ENCODE measurements at regions of chr20 and their contacts with region 1.

Region 1: GRCh38 chr20:728248-728944 is 39.9 kb downstream of the SLC52A3 start:
- DNase-seq: peak; percentile 84 to 88 (median 87)
- ATAC-seq: peak; percentile 99
- H3K4me3 ChIP-seq: peak overlapping the region; percentile 61
- H3K27ac ChIP-seq: peak overlapping the region; percentile 74
- H3K4me1 ChIP-seq: peaks cover 5 to 18% of the 10 kb centered on the region in 2 experiments; a peak in 4 of 5 replicates
- H3K27me3 ChIP-seq: no peaks in the 10 kb centered on the region
- CTCF ChIP-seq: peak; percentile 76 to 92 (median 86)
- EP300 ChIP-seq: no peak
- POLR2A ChIP-seq: no peak
- RAD21 ChIP-seq: peak; percentile 95 to 96

Region 2: DNA sequence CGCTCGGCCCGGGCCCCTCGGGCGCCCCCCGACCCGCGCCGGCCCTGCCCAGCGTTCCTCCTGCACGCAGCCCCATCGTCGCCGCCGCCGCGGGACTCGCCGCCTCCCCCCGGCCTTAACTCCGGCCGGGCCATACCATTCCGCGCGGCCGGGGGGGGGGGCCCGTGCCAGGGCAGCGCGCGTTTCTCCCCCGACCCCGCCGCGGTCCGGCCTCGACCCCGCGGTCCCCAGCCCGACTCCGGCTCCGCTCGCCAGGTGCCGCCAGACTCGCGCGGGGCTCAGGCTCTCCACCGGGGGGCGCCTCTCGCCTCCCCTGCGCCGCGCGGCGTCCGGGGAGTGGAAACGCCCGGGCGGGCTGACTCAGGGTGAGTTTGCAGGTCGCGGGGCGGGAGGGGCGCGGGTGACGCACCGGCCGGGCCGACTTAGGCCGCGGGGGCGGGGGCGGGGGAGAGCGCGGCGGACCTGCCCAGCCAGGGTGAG is 75.2 kb before region 1 on chr20 and contains the start of gene SRXN1:
- CTCF ChIA-PET with region 1: interaction called, 22 read pairs
- POLR2A ChIA-PET with region 1: no interaction called
- in situ Hi-C with region 1: loop called (anchors 5 kb)
- intact Hi-C with region 1: loop called (anchors 2 kb)
- DNase-seq: peak; percentile 85 to 95 (median 88)
- ATAC-seq: peak; percentile 93
- H3K4me3 ChIP-seq: peak within 1 kb of the TSS; percentile 70
- H3K27ac ChIP-seq: peak within 1 kb of the TSS; percentile 98
- H3K4me1 ChIP-seq: peaks cover 39 to 46% of the 10 kb centered on the region in 2 experiments
- H3K27me3 ChIP-seq: no peaks in the 10 kb centered on the region
- CTCF ChIP-seq: peak; percentile 52 to 99 (median 96)
- EP300 ChIP-seq: 0 out of 2 replicates have a peak, but pooled peaks have one; percentile 14
- POLR2A ChIP-seq: no peak
- RAD21 ChIP-seq: peak; percentile 84 to 95
- polyA plus RNA-seq, gene SRXN1: 6.8 to 8.4 TPM

Region 3: GRCh38 chr20:672962-673602 is 55.3 kb before region 1 on chr20:
- CTCF ChIA-PET with region 1: no interaction called
- POLR2A ChIA-PET with region 1: interaction called, 3 read pairs
- in situ Hi-C with region 1: no loop called
- intact Hi-C with region 1: loop called (anchors 5 kb)
- DNase-seq: peak in 2 of 4 experiments; percentile 21 to 29
- ATAC-seq: peak; percentile 5
- H3K4me3 ChIP-seq: peak overlapping the region; percentile 6; the same call in 1 of the 2 replicates
- H3K27ac ChIP-seq: peak overlapping the region; percentile 77
- H3K4me1 ChIP-seq: peaks cover 41 to 75% of the 10 kb centered on the region in 2 experiments
- H3K27me3 ChIP-seq: no peaks in the 10 kb centered on the region; a peak in 1 of 5 replicates
- CTCF ChIP-seq: peak; percentile 24 to 54 (median 36); a peak in 5 of 6 replicates
- EP300 ChIP-seq: no peak
- POLR2A ChIP-seq: no peak
- RAD21 ChIP-seq: peak in 1 of 2 experiments; percentile 24; a peak in 2 of 4 replicates

Region 4: DNA sequence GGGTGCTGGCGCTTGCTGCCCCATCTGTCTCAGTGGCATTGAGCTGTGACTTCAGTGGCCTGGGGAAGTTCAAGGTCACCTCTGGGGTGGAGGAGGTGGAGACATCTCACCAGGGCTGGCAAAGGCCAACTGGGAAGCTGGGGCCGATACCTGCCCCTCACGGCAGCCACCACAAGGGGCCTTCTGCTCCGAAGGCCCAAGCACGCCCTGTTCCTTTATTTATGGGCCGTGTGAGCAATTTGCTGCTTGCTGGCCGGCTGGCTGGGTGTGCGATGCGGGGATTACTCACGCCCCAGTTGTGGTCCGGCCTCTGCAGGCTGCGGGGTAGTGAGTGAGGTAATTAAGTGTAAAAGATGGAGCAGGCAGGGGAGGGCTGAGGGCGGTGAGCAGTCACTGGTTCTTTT is 39.6 kb before region 1 on chr20:
- CTCF ChIA-PET with region 1: no interaction called
- POLR2A ChIA-PET with region 1: no interaction called
- in situ Hi-C with region 1: no loop called
- intact Hi-C with region 1: no loop called
- DNase-seq: peak; percentile 26 to 49 (median 34)
- ATAC-seq: peak; percentile 79
- H3K4me3 ChIP-seq: no peak overlapping the region
- H3K27ac ChIP-seq: no peak overlapping the region
- H3K4me1 ChIP-seq: peaks cover 27 to 42% of the 10 kb centered on the region in 2 experiments; a peak in 4 of 5 replicates
- H3K27me3 ChIP-seq: no peaks in the 10 kb centered on the region
- CTCF ChIP-seq: peak; percentile 15 to 30 (median 27); a peak in 3 of 6 replicates
- EP300 ChIP-seq: no peak
- POLR2A ChIP-seq: no peak
- RAD21 ChIP-seq: no peak